Activated T-helper 1 cell treated with anti-CD3 and anti-CD28 coated beads, Interleukin-12 subunit alpha, Interleukin-12 subunit beta, Interleukin-2, Interleukin-4 antibody, amounts not matched to agents 30 ng/mL and 10 ng/mL and 1 ng/mL, durations not matched to agents 14 hours and 24 hours and 36 hours (primary cell): ENCODE measurements at regions of chr17 and their contacts with region 1.

Region 1: GRCh38 chr17:51604299-51605020 is 344.1 kb downstream of the UTP18 start:
- DNase-seq: no peak
- H3K4me3 Mint-ChIP-seq: no peak overlapping the region
- H3K27ac Mint-ChIP-seq: no peak overlapping the region
- H3K4me1 Mint-ChIP-seq: no peaks in the 10 kb centered on the region
- H3K27me3 Mint-ChIP-seq: peaks cover 10% of the 10 kb centered on the region

Region 2: DNA sequence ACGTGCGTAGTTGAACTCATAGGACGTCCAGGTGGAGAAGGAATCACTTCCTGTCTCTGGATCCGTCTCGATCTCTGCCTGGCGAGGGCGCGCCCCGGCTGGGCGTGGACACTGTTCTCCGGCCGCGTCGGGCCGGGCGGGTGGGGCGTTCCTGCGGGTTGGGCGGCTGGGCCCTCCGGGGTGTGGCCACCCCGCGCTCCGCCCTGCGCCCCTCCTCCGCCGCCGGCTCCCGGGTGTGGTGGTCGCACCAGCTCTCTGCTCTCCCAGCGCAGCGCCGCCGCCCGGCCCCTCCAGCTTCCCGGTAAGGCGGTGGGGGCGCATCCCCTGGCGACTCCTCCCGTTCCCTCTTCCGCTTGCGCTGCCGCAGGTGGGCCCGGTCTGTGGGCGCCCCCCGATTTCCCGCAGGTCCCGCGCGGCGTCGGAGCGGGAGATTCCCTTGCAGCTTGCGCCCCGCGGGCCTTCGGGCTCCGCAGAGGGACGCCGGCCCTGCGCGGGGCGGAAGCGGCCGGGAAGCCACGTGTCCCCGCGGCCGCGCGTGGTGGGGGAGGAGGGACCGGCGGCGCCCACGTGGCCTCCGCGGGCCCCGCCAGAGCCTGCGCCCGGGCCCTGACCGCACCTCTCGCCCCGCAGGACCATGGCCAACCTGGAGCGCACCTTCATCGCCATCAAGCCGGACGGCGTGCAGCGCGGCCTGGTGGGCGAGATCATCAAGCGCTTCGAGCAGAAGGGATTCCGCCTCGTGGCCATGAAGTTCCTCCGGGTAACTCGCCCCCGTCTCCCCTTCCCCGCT is 438.1 kb before region 1 on chr17 and contains the start of gene NME2:
- intact Hi-C with region 1: no loop called
- DNase-seq: peak; percentile 69
- H3K4me3 Mint-ChIP-seq: peak within 1 kb of the TSS; percentile 98
- H3K27ac Mint-ChIP-seq: peak within 1 kb of the TSS; percentile 98
- H3K4me1 Mint-ChIP-seq: peaks cover 32% of the 10 kb centered on the region
- H3K27me3 Mint-ChIP-seq: peaks cover 1% of the 10 kb centered on the region
- total RNA-seq, gene NME2: 664 and 674 TPM in 2 replicates

Region 3: DNA sequence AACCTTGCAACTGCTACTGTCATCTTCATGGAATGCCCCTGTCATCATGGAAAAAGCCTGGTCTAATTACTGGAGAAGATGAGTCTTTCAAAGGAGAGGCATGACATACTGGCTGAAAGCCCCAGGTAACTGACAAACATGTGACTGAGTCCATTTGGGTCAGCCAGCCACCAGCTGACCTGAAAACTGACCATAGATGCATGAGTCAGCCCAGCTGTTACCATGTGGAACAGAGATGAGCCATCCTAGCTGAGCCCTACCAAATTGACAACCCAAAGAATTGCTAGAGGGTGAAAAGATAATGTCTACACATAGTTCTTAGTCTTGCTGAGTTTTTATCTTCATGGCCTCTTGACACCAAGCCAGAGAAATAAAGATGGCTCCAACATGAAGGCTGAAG is 32.3 kb before region 1 on chr17:
- intact Hi-C with region 1: loop called (anchors 1 kb)
- DNase-seq: no peak
- H3K4me3 Mint-ChIP-seq: no peak overlapping the region
- H3K27ac Mint-ChIP-seq: no peak overlapping the region
- H3K4me1 Mint-ChIP-seq: no peaks in the 10 kb centered on the region
- H3K27me3 Mint-ChIP-seq: no peaks in the 10 kb centered on the region

Region 4: GRCh38 chr17:51585514-51586104 is 18.9 kb before region 1 on chr17:
- intact Hi-C with region 1: no loop called
- DNase-seq: no peak
- H3K4me3 Mint-ChIP-seq: no peak overlapping the region
- H3K27ac Mint-ChIP-seq: no peak overlapping the region
- H3K4me1 Mint-ChIP-seq: no peaks in the 10 kb centered on the region
- H3K27me3 Mint-ChIP-seq: no peaks in the 10 kb centered on the region

Region 5: DNA sequence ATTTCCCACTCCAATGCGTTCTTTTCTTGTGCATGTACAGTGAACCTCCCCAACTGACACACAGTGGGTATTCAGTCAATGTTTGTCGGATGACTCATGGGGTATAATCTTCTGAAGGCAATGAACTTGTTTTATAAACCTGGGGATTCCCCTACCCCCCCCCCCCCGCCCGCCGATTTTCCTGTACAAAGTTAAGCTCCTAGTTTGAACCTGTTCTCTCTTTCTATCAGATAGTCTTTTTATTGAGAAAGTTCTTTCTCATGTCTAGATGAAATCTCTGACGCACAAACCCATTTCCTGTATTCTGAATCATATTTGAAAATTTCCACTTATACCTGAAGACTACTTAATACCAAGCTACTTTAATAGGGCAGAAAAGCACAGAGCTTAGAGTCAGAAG is 215.8 kb after region 1 on chr17:
- intact Hi-C with region 1: no loop called
- DNase-seq: no peak
- H3K4me3 Mint-ChIP-seq: no peak overlapping the region
- H3K27ac Mint-ChIP-seq: peak overlapping the region; percentile 19
- H3K4me1 Mint-ChIP-seq: no peaks in the 10 kb centered on the region
- H3K27me3 Mint-ChIP-seq: no peaks in the 10 kb centered on the region